ENCODE measurements at regions of chr10 and their contacts with region 1.

Region 1: GRCh38 chr10:74213571-74214162 is 62.6 kb downstream of the ADK start:
- DNase-seq: peak; percentile 65
- H3K4me3 ChIP-seq: no peak overlapping the region
- H3K27ac ChIP-seq: no peak overlapping the region
- H3K4me1 ChIP-seq: peaks cover 0 to 7% of the 10 kb centered on the region in 2 experiments; a peak in 2 of 4 replicates
- H3K27me3 ChIP-seq: no peaks in the 10 kb centered on the region
- CTCF ChIP-seq: peak; percentile 76
- EP300 ChIP-seq: no peak
- RAD21 ChIP-seq: peak; percentile 69

Region 2: DNA sequence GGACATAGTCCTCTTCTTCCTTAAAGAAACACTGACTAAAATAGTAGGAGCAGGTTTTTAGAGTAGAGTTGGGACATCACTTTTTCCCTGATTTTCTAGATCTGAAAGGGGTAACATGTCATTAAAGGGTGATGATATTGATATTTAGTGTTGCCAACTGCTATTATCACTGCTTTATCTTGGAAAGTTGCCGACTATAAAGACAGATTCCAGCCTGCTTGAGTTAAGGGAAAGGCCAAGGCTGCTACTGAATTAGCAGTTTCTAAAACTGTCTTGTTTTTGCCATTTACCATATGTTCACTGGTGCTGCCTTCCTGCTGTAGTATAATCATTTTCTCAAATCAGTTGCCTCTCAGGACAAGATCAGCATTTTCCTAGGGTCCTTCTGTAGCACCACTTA is 92.8 kb before region 1 on chr10:
- CTCF ChIA-PET with region 1: interaction called, 15 read pairs
- POLR2A ChIA-PET with region 1: no interaction called
- DNase-seq: no peak
- H3K4me3 ChIP-seq: no peak overlapping the region
- H3K27ac ChIP-seq: no peak overlapping the region; a peak in 1 of 4 replicates
- H3K4me1 ChIP-seq: peaks cover 2 to 6% of the 10 kb centered on the region in 2 experiments; a peak in 1 of 4 replicates
- H3K27me3 ChIP-seq: no peaks in the 10 kb centered on the region
- CTCF ChIP-seq: no peak
- EP300 ChIP-seq: no peak
- RAD21 ChIP-seq: no peak